Panc1 (cell line): ENCODE measurements at regions of chr17 and their contacts with region 1.

Region 1: GRCh38 chr17:56125830-56126819 is 27.1 kb upstream of the ANKFN1 start:
- DNase-seq: no peak
- ATAC-seq: no peak
- H3K4me3 ChIP-seq: no peak overlapping the region
- H3K27ac ChIP-seq: no peak overlapping the region
- H3K4me1 ChIP-seq: no peaks in the 10 kb centered on the region
- H3K27me3 ChIP-seq: 0 out of 2 replicates have a peak, but pooled peaks cover 3% of the 10 kb centered on the region
- CTCF ChIP-seq: peak; percentile 73

Region 2: GRCh38 chr17:56319517-56319916 is 193.4 kb after region 1 on chr17:
- CTCF ChIA-PET with region 1: no interaction called
- POLR2A ChIA-PET with region 1: no interaction called
- in situ Hi-C with region 1: no loop called
- intact Hi-C with region 1: loop called (anchors 5 kb)
- DNase-seq: peak; percentile 13
- ATAC-seq: peak; percentile 87
- H3K4me3 ChIP-seq: no peak overlapping the region
- H3K27ac ChIP-seq: no peak overlapping the region
- H3K4me1 ChIP-seq: no peaks in the 10 kb centered on the region
- H3K27me3 ChIP-seq: no peaks in the 10 kb centered on the region
- CTCF ChIP-seq: peak; percentile 68

Region 3: DNA sequence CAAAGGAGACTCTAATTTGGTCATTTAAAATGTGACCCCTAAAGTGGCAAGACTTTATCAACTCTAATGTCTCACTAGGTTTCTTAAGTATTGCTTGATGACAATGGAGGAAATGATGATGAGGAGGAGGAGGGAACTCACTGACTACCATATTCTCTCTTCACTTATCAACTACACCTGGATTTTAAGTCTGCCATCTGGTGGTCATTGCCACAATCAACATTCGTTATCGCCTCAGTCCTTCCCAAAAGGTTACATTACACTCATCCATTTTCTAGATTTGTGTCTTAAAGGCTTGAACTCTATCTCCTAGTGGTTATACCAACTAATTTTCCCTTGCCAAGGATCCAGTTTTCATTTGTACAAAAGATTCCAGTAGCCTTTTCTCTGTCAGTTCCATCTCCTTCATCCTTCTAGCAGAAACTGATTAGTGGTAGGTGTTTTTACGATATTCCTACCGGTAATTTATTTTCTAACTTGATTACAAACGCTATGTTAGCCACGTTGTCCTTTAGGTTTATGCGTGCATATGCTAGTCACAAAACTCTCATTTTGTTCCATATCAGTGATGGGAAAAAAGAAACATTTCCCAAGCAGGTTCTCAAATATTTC is 352.8 kb after region 1 on chr17:
- CTCF ChIA-PET with region 1: no interaction called
- POLR2A ChIA-PET with region 1: no interaction called
- in situ Hi-C with region 1: no loop called
- intact Hi-C with region 1: loop called (anchors 5 kb)
- DNase-seq: peak; percentile 8
- ATAC-seq: peak; percentile 58; the same call in 1 of the 2 replicates
- H3K4me3 ChIP-seq: no peak overlapping the region
- H3K27ac ChIP-seq: no peak overlapping the region
- H3K4me1 ChIP-seq: no peaks in the 10 kb centered on the region
- H3K27me3 ChIP-seq: no peaks in the 10 kb centered on the region
- CTCF ChIP-seq: peak; percentile 61; the same call in 1 of the 2 replicates